Activated B cell treated with CpG ODN at 0.5 μM for 24 hours (primary cell): ENCODE measurements at regions of chr6 and their contacts with region 1.

Region 1: DNA sequence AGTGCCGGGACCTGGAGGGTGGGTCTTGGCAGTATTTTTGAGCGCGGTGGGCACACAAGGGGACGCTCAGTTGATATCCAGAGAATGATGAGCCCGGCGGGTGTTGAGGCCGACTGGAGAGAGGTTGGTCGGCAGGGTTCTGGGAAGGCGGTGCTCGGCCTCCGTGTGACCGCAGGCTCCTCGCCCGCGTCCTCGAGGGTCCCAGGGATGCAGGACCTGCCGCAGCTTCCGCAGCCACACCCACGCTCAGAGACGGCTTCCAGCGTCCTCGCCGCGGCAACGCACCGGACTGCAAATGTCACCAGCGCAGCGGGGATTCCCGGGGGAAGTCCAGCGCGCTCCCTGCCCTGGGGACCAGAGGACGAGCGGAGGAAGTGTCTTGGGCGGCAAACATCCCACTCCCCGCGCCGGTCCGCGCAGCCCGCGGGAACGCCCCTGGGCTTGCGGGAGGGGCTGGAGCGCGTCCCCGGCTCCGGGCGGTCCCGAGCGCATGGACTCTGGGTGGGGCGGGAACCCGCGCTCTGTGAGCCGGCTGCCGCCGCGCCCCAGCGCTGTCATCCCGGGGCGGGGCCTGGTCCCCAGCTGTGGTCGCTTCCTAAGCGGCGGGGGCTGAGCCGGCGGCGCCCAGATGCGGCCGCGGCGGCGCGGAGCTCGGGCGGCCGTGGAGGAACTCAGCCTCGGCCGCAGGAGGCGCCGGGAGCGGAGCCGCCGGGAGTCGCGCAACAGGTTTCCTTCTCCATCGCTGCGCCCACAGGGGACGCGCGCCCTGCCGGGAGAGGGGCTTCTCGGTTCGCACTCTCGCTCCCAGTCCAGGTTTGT is at the start of gene STX11:
- DNase-seq: peak; percentile 84
- ATAC-seq: peak; percentile 72
- H3K4me3 Mint-ChIP-seq: peak within 1 kb of the TSS; percentile 92
- H3K27ac Mint-ChIP-seq: peak within 1 kb of the TSS; percentile 96
- H3K4me1 Mint-ChIP-seq: peaks cover 46% of the 10 kb centered on the region
- H3K27me3 Mint-ChIP-seq: no peaks in the 10 kb centered on the region
- CTCF ChIP-seq: no peak
- total RNA-seq, gene STX11: 23.3 and 26.4 TPM in 2 replicates

Region 2: DNA sequence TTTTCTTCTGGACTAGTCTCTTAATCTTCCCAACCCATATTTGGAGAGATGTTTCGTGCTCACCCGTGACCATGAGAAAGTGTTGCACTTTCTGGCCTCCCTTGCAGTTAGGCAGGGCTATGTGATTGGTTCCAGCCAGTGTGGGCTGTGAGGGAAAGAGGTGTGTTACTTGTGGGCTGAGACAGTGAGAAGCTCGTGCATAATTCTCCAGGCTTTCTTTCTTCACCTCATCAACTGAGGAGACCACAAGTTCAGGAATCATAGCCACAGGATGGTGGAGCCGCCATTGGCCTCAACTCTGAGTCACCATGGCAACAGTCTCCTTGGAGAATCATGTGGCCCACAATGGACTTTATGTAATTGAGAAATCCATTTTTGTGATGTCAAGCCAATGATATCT is 581.1 kb before region 1 on chr6:
- CTCF ChIA-PET with region 1: no interaction called
- POLR2A ChIA-PET with region 1: no interaction called
- intact Hi-C with region 1: loop called (anchors 1 kb)
- DNase-seq: no peak
- ATAC-seq: no peak
- H3K4me3 Mint-ChIP-seq: no peak overlapping the region
- H3K27ac Mint-ChIP-seq: no peak overlapping the region
- H3K4me1 Mint-ChIP-seq: peaks cover 14% of the 10 kb centered on the region
- H3K27me3 Mint-ChIP-seq: no peaks in the 10 kb centered on the region
- CTCF ChIP-seq: no peak

Region 3: DNA sequence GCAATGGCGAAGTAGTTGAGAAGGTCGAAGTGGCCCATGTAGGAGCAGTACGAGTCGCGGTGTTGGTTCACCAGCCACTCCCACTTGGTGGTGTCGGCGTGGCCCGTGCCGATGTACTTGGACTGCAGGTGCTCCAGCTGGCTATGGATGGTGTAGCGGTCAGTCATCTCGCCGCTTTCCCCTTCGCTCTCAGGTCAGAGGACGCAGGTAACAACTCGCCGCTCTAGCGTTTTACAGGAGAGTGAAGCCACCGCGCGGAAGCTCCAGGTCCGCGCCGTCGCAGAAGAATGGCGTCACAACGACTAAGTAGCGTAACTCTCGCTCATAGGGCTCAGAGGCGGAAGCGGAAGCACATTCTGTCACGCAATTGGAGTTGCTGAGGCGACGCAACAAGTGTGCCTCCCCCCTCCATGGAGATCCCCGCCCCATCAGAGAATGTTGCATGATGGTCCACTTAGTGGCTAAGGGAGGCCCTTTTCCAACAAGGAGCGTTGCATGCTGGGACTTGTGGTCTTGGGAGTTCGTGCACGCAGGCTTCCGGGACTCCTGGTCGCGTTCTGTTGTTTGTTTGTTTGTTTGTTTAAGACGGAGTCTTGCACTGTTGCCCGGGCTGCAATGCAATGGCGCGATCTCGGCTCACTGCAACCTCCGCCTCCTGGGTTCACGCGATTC is 54.6 kb before region 1 on chr6 and contains the start of gene SF3B5:
- CTCF ChIA-PET with region 1: no interaction called
- POLR2A ChIA-PET with region 1: interaction called, 11 read pairs
- intact Hi-C with region 1: loop called (anchors 1 kb)
- DNase-seq: peak; percentile 93
- ATAC-seq: peak; percentile 96
- H3K4me3 Mint-ChIP-seq: peak within 1 kb of the TSS; percentile 99
- H3K27ac Mint-ChIP-seq: peak within 1 kb of the TSS; percentile 99
- H3K4me1 Mint-ChIP-seq: peaks cover 24% of the 10 kb centered on the region
- H3K27me3 Mint-ChIP-seq: no peaks in the 10 kb centered on the region
- CTCF ChIP-seq: no peak
- total RNA-seq, gene SF3B5: 144 and 147 TPM in 2 replicates

Region 4: DNA sequence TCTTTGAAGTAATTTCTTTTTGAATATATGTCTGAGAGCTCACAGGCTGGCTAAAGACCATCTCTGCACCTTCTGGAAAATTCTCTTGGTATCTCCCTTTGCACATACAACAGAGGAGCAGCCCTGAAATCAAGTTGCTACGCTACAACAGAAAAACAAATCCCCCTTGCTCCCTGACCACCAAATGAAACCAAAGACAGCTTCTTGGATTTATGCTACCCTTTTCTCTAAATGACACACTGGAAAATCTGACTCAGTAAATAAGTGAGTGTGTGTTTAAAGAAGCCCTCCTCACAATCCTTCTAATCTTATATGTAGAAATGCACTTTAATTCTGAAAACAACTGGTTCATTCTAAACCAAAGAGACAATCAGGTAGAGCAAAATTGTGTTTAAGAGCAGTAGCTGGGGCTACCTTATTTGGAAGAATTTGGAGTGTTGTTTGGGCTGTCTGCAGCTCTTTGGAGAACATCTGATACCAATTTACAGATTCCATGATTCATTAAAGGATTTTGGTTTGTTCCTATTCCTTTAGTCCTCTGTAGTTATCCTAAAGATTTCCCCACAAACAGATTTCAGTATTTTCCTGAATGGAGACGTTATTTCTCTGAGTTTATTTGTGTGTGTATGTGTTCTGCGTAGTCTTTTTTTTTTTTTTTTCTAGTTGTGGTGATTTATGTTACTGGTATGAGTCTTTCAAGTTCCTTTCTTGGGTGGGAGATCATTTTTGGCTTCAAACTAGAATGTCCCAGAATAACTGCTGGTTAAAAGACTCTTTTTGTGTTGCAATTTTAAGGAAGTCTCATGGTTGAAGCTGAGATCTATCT is 98.6 kb after region 1 on chr6:
- CTCF ChIA-PET with region 1: no interaction called
- POLR2A ChIA-PET with region 1: interaction called, 10 read pairs
- intact Hi-C with region 1: no loop called
- DNase-seq: no peak
- ATAC-seq: no peak
- H3K4me3 Mint-ChIP-seq: no peak overlapping the region
- H3K27ac Mint-ChIP-seq: no peak overlapping the region
- H3K4me1 Mint-ChIP-seq: peaks cover 16% of the 10 kb centered on the region
- H3K27me3 Mint-ChIP-seq: peaks cover 11% of the 10 kb centered on the region
- CTCF ChIP-seq: no peak

Region 5: DNA sequence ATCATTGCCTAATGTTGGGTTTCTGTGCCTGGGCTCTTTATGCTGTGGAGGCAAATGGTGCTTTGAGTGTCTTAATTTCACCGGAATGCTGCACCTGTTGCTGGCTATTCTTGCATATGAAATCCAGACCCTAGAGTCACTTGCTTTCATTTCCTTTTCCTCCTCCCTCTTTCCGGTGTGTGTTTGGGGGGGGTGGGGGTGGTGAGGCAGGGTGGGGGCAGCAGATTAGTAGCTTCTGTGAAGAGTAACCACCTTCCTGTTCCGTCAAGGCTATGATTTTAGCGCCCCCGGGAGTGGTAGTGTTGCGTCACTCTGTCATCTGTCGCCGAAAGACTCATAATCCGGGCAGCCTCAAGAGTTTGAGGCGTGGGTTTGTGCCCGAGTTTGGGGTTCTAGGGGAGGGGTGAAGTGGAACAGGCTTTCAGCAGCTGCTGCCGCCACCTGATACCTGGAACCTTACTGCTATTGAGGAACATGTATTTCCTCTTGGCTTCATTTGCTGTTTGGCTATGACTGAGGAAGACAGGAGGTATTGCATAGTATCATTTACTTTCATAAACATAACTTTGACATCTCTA is 184.1 kb after region 1 on chr6:
- CTCF ChIA-PET with region 1: no interaction called
- POLR2A ChIA-PET with region 1: interaction called, 7 read pairs
- intact Hi-C with region 1: loop called (anchors 2 kb)
- DNase-seq: peak; percentile 52
- ATAC-seq: peak; percentile 76
- H3K4me3 Mint-ChIP-seq: peak overlapping the region; percentile 78
- H3K27ac Mint-ChIP-seq: peak overlapping the region; percentile 88
- H3K4me1 Mint-ChIP-seq: peaks cover 71% of the 10 kb centered on the region
- H3K27me3 Mint-ChIP-seq: no peaks in the 10 kb centered on the region
- CTCF ChIP-seq: no peak

Region 6: DNA sequence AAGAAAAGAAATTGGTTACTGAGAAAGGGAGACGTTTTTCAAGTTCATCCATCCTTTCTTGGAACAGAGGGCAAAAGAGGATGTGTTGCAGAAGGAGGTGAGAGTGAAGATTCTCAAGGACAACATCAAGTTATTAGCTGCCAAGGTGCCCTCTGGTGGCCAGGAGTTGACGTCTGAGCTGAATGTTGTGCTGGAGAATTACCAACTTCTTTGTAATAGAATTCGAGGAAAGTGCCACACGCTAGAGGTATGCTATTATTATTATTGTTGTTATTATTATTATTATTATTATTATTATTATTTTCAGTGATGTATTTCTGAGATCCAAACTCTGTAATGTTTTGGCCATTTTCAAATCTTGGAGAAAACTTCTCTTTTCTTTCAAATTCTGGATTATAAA is 332.0 kb after region 1 on chr6:
- CTCF ChIA-PET with region 1: interaction called, 3 read pairs
- POLR2A ChIA-PET with region 1: interaction called, 6 read pairs
- intact Hi-C with region 1: loop called (anchors 1 kb)
- DNase-seq: peak; percentile 39
- ATAC-seq: peak; percentile 91
- H3K4me3 Mint-ChIP-seq: no peak overlapping the region
- H3K27ac Mint-ChIP-seq: peak overlapping the region; percentile 41
- H3K4me1 Mint-ChIP-seq: no peaks in the 10 kb centered on the region
- H3K27me3 Mint-ChIP-seq: no peaks in the 10 kb centered on the region
- CTCF ChIP-seq: no peak